MCF 10A (cell line): ENCODE measurements at regions of chr6 and their contacts with region 1.

Region 1: DNA sequence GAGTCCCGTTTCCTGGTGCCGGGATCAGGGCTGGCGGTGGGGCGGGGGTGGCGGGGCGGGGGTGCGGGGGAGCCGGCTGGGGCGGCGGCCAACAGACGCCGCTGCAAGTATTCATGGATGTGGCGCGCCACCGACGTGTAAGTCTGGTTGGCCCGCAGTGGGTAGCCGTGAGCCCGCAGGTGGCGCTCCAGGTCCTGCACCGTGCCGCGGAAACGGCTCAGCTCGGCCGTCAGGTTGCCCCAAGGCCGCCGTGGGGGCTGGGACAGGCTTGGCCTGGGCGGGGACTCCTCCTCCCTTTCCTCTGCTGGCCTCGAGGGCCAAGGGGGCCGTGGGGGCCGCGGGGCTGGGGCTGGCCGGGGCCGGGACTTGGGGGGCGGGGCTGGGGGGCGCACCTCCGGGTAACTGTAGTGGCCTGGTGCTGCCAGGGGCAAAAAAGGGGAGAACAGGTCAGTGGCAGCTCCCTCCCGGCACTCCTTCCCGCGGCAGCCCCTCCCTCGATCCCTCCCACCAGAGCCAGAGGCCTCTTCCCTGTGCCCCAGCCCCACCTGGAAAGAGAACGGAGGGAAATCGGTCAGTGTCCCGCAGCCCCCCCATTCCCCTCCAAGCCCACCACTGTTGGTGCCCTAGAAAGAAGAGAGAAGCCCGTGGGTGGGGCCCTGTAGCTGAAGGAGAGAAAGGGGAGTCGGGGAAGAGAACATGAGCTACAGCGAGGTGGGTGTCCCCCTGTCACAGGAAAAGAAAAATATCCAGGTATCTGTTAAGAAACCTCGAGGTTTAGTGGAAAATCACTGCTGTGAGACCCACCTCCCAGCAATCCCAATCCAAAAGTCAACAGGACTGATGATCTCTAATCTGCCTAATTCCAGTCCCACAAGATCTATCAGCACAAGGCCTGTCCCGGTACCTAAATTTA is 21.3 kb downstream of the TNXB start:
- DNase-seq: peak; percentile 80
- H3K4me3 Mint-ChIP-seq: no peak overlapping the region
- H3K27ac Mint-ChIP-seq: peak overlapping the region; percentile 61
- H3K4me1 Mint-ChIP-seq: peaks cover 34% of the 10 kb centered on the region
- H3K27me3 Mint-ChIP-seq: peaks cover 24% of the 10 kb centered on the region
- CTCF ChIP-seq: peak; percentile 50

Region 2: GRCh38 chr6:32153564-32154513 is 66.0 kb after region 1 on chr6 and contains the start of gene PPT2:
- CTCF ChIA-PET with region 1: no interaction called
- POLR2A ChIA-PET with region 1: no interaction called
- intact Hi-C with region 1: loop called (anchors 1 kb)
- DNase-seq: peak; percentile 79
- H3K4me3 Mint-ChIP-seq: peak within 1 kb of the TSS; percentile 86
- H3K27ac Mint-ChIP-seq: peak within 1 kb of the TSS; percentile 83
- H3K4me1 Mint-ChIP-seq: peaks cover 18% of the 10 kb centered on the region
- H3K27me3 Mint-ChIP-seq: no peaks in the 10 kb centered on the region
- CTCF ChIP-seq: no peak
- total RNA-seq, gene PPT2: 3.7 and 5.4 TPM in 2 replicates